GM18951 (cell line): ENCODE measurements at regions of chr2 and their contacts with region 1.

Region 1: DNA sequence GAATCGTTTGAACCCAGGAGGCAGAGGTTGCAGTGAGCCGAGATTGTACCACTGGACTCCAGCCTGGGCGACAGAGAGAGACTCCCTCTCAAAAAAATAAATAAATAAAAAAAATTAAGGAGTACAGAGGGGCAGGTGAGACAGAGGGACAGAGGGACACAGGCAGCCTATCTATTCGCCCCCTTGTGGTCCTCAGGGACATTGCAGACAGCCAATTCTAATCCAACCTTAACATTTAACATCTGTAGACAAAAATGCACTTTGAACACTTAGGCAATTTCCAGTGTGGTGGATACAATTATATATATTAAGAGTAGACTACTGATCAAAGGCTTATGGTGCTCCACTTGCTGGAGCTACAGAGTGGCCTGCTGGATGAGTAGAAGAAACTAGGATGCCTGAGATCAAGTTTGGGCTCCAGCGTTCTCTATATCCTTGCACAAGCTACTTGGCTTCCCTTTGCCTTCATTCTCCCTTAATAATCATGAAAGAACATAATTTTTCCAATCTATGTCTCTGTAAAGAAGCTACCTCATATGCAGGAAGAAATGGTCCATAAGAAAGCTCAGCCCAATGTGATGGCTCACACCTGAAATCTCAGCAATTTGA is 8.2 kb upstream of the SMARCAL1 start:
- POLR2A ChIP-seq: no peak

Region 2: GRCh38 chr2:216215658-216216390 is 188.3 kb before region 1 on chr2:
- in situ Hi-C with region 1: loop called (anchors 10 kb)
- POLR2A ChIP-seq: no peak